Endothelial cell of umbilical vein (primary cell): ENCODE measurements at regions of chr19 and their contacts with region 1.

Region 1: GRCh38 chr19:48363810-48364563 is at the starts of genes SYNGR4 and TMEM143:
- DNase-seq: peak; percentile 100
- H3K4me3 ChIP-seq: peak within 1 kb of the TSS; percentile 11 to 53 (median 35)
- H3K27ac ChIP-seq: peak within 1 kb of the TSS; percentile 40
- H3K4me1 ChIP-seq: peaks cover 8% of the 10 kb centered on the region
- H3K27me3 ChIP-seq: no peaks in the 10 kb centered on the region
- CTCF ChIP-seq: no peak
- POLR2A ChIP-seq: peak; percentile 15
- total RNA-seq, gene SYNGR4: not detected in 2 replicates
- total RNA-seq, gene TMEM143: 4.6 and 7.3 TPM in 2 replicates

Region 2: DNA sequence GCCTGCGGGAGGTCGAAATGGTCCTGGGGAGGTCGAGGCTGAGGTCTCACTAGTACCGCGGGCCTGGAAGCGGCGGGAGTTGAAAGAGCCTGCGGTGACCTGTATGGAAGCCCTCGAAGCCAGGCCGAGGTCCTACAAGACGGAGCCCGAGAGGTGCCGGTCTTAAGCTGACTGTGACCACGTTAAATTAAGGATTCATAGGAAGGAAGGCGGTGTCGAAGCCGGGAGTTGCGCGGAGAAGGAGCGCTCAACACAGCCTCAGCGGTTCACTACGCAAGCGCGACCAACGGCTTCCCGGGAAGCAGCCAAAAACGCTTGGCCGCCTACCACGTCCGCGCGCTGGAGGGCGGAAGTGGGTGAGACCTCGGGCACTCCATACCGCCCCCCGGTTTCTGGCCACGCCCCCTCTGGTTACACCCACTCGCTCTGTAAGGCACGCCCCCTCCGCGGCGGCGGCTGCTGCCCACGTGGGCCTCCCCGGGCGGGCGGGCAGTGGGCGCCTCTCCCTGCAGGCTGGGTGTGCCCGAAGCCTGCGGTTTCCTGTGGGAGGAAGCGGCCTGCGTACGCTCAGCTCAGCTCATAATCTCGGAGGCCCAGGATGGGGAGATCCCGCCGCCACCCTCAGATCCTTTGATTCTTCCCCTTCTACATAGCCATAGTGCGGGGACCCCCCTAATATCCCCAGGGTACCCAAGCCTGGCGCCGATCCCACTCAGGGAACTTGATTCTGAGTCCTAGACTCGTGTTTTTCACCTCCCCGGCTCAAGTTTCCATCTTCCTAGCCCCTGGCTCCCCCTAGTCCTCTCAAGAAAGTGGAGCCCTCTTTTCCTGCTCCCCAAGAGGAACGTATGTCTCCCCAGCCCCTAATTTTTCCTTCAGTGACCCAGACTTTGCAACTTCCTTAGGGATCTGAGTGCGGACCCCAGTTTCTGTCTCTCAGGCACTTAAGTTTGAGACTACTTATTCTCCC is 42.1 kb before region 1 on chr19:
- CTCF ChIA-PET with region 1: interaction called, 10 read pairs
- POLR2A ChIA-PET with region 1: no interaction called
- dilution Hi-C with region 1: no loop called
- intact Hi-C with region 1: loop called (anchors 2 kb)
- DNase-seq: peak; percentile 98
- H3K4me3 ChIP-seq: peak overlapping the region in 2 of 3 experiments; percentile 38 to 40
- H3K27ac ChIP-seq: peak overlapping the region; percentile 97
- H3K4me1 ChIP-seq: peaks cover 27% of the 10 kb centered on the region
- H3K27me3 ChIP-seq: no peaks in the 10 kb centered on the region
- CTCF ChIP-seq: no peak
- POLR2A ChIP-seq: peak; percentile 82

Region 3: DNA sequence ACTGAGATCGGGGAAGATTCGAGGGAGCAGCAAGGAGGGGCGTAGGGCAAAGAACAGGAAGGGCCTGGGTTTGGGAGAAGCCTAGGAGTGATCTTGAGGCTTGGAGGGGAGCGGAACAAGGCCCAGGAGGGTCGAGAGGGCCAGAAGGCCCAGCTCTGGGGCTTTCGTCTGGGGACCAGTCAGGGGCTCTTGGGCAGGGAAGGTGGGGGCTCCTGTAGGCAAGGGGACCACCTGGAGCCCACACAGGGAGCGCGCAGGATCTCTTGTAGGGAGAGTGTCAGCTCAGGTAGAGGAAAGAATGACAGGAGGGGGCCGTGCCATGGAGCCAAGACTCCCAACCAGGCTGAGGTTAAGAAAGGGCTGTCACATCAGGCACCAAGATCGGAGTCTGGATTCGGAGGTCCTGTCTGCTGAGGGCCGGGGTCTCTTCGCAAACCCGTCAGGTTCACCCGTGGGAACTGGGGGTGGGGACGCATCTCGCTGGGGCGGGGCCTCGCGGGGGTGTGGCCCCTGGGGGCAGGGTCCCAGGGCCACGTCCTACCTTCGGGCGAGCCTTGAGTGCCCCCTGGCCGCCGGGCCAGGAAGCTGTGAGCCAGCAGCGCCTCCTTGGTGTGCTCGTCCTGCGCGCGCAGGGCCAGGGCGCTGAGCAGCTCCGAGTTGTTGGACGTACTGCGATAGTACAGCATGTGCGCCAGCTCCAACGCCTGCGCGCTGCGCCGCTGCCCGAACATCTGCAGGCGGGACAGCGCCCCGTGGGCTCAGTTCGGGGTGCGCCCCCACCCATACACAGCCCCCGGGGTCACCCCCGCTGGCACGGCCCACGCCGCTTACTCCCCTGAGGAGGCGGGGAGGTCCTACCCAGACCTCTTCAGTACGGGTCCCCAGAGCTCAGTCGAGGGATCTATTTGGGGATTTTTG is 30.3 kb before region 1 on chr19:
- CTCF ChIA-PET with region 1: interaction called, 21 read pairs
- POLR2A ChIA-PET with region 1: no interaction called
- dilution Hi-C with region 1: no loop called
- intact Hi-C with region 1: no loop called
- DNase-seq: peak; percentile 92
- H3K4me3 ChIP-seq: peak overlapping the region in 2 of 3 experiments; percentile 20 to 33
- H3K27ac ChIP-seq: peak overlapping the region; percentile 64
- H3K4me1 ChIP-seq: peaks cover 16% of the 10 kb centered on the region
- H3K27me3 ChIP-seq: no peaks in the 10 kb centered on the region
- CTCF ChIP-seq: peak; percentile 77 to 94
- POLR2A ChIP-seq: no peak

Region 4: DNA sequence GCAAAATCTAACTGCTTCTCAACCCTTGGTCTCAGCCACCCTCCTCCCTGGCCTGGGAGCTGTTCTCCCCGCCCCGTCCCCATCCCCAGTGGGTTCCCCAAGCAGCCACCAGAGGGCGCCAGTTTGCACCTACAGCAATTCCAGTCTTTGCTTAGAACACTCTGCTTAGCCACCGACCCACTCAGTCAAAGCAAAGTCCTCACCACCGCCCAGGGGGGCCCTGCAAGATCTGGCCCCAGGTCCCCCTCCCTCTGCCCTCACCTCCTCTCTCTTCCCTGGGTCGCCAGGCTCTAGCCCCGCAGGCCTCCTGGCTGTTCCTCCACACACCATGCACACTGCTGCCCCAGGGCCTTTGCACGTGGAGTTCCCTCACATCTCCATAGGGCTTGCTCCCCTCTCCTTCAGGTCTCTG is 12.6 kb before region 1 on chr19:
- CTCF ChIA-PET with region 1: interaction called, 29 read pairs
- POLR2A ChIA-PET with region 1: no interaction called
- dilution Hi-C with region 1: no loop called
- intact Hi-C with region 1: no loop called
- DNase-seq: peak; percentile 57
- H3K4me3 ChIP-seq: no peak overlapping the region
- H3K27ac ChIP-seq: no peak overlapping the region
- H3K4me1 ChIP-seq: no peaks in the 10 kb centered on the region
- H3K27me3 ChIP-seq: no peaks in the 10 kb centered on the region
- CTCF ChIP-seq: peak; percentile 82 to 90
- POLR2A ChIP-seq: no peak

Region 5: DNA sequence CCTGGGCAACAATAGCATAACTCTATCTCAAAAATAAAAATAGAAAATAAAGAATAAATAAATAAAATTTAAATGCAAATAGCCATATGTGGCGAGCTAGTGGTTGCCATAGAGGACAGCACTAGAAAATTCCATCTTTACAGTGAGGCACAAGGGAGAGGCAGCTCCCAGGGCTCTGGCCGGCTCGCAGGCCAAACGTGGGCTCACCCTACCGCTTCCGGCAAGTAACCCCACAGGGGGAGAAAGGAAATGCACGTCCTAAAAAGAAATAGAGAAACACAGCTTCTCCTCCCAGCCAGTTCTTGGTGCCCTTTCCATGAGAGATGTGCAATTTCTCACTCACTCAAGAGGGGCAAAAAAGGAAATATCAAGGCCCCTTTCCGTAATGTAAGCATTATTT is 69.3 kb after region 1 on chr19:
- CTCF ChIA-PET with region 1: no interaction called
- POLR2A ChIA-PET with region 1: interaction called, 10 read pairs
- dilution Hi-C with region 1: no loop called
- intact Hi-C with region 1: no loop called
- DNase-seq: no peak
- H3K4me3 ChIP-seq: no peak overlapping the region
- H3K27ac ChIP-seq: no peak overlapping the region
- H3K4me1 ChIP-seq: no peaks in the 10 kb centered on the region
- H3K27me3 ChIP-seq: no peaks in the 10 kb centered on the region
- CTCF ChIP-seq: no peak
- POLR2A ChIP-seq: no peak